Dendritic cell treated with granulocyte-macrophage colony-stimulating factor and Interleukin-4, amounts not matched to agents 40 ng/mL and 50 ng/mL, for 4 days (primary cell): ENCODE measurements at regions of chr12 and their contacts with region 1.

Region 1: GRCh38 chr12:1939801-1940607 is 21.6 kb upstream of the CACNA2D4 start:
- H3K4me3 Mint-ChIP-seq: no peak overlapping the region
- H3K27ac Mint-ChIP-seq: no peak overlapping the region
- H3K4me1 Mint-ChIP-seq: no peaks in the 10 kb centered on the region
- H3K27me3 Mint-ChIP-seq: no peaks in the 10 kb centered on the region

Region 2: GRCh38 chr12:1650260-1650977 is 289.6 kb before region 1 on chr12:
- intact Hi-C with region 1: loop called (anchors 5 kb)
- H3K4me3 Mint-ChIP-seq: no peak overlapping the region
- H3K27ac Mint-ChIP-seq: no peak overlapping the region
- H3K4me1 Mint-ChIP-seq: peaks cover 46% of the 10 kb centered on the region
- H3K27me3 Mint-ChIP-seq: peaks cover 4% of the 10 kb centered on the region

Region 3: GRCh38 chr12:1966561-1967226 is 26.7 kb after region 1 on chr12:
- intact Hi-C with region 1: no loop called
- H3K4me3 Mint-ChIP-seq: no peak overlapping the region
- H3K27ac Mint-ChIP-seq: no peak overlapping the region
- H3K4me1 Mint-ChIP-seq: no peaks in the 10 kb centered on the region
- H3K27me3 Mint-ChIP-seq: no peaks in the 10 kb centered on the region

Region 4: GRCh38 chr12:2023365-2023764 is 83.4 kb after region 1 on chr12:
- intact Hi-C with region 1: no loop called
- H3K4me3 Mint-ChIP-seq: no peak overlapping the region
- H3K27ac Mint-ChIP-seq: no peak overlapping the region
- H3K4me1 Mint-ChIP-seq: no peaks in the 10 kb centered on the region
- H3K27me3 Mint-ChIP-seq: peaks cover 2% of the 10 kb centered on the region